Vagina (tissue), 2 donors: ENCODE measurements at regions of chr5 and their contacts with region 1.

Region 1: GRCh38 chr5:76433261-76433660 is 30.2 kb downstream of the IQGAP2 start:
- DNase-seq: no peak
- H3K4me3 ChIP-seq: no peak overlapping the region
- H3K27ac ChIP-seq: no peak overlapping the region
- H3K4me1 ChIP-seq: no peaks in the 10 kb centered on the region
- H3K27me3 ChIP-seq: no peaks in the 10 kb centered on the region
- CTCF ChIP-seq: no peak
- POLR2A ChIP-seq: no peak

Region 2: DNA sequence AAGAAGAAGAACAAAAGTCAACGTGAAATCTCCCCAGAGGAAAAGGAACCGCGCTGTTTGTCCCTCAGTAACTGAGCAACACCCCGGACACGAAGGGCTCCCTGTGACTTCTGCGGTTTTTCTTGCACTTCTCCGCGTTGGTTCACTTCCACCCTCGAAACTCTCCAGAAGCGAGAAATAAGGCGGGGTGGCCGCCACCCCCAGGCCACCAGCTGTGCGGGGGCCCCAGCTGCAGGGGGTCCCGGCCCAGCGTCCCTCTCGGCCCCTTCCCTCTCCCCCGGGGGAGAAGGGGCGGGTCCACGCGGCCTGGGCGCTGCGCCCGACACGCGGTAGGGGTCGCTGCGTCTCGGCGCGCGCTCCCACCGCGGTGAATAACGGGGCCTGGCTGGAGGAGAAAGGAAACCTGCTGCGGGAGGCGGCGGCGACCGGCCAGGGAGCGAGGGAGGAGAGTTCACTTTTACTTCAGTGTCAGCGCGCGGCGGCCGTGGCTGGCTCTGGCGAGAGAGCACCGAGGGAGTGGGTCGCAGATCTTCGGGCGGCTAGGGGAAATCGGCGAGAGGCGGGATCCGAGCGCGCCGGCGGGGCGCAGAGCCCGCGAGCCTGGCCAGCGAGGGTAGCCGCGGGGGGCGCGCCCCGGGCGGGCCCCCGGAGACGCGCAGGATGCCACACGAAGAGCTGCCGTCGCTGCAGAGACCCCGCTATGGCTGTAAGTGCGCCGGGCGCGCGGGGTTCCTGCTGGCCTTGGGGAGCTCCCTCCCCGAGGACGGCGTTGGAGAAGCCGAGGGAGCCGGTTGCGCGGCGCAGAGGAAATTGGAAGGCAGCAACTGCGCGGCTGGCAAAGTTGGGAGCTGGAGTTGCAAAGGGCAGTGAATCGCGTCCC is 30.1 kb before region 1 on chr5 and contains the start of gene IQGAP2:
- intact Hi-C with region 1: no loop called
- DNase-seq: no peak
- H3K4me3 ChIP-seq: peak within 1 kb of the TSS; percentile 51 to 52
- H3K27ac ChIP-seq: peak within 1 kb of the TSS; percentile 65
- H3K4me1 ChIP-seq: peaks cover 17% of the 10 kb centered on the region
- H3K27me3 ChIP-seq: no peaks in the 10 kb centered on the region
- CTCF ChIP-seq: peak in 2 of 3 experiments; percentile 35 to 44
- POLR2A ChIP-seq: no peak
- total RNA-seq, gene IQGAP2: 8.6 TPM

Region 3: DNA sequence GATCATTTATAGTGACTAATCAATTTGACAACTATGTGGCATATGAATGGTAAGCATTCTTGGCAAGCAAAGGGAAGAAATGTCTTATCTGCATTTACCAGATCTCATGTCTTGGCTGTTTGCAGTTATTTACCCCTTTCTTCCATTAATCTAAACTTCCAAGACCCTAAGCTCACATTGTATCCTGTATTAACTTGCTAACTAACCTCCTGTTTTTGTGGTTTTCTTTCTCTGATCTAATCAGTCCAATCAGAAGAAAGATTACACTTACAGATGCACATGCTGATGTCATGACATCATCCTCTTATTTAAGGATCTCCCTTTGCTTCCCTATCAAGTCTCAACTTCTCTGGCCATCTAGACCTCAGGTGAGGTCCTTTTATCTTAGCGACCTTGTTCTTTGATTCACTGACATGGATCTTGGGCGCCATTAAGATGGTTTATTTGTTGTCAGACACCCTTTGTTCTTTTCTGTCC is 94.5 kb after region 1 on chr5:
- intact Hi-C with region 1: no loop called
- DNase-seq: no peak
- H3K4me3 ChIP-seq: no peak overlapping the region
- H3K27ac ChIP-seq: no peak overlapping the region
- H3K4me1 ChIP-seq: no peaks in the 10 kb centered on the region
- H3K27me3 ChIP-seq: no peaks in the 10 kb centered on the region
- CTCF ChIP-seq: no peak
- POLR2A ChIP-seq: no peak

Region 4: DNA sequence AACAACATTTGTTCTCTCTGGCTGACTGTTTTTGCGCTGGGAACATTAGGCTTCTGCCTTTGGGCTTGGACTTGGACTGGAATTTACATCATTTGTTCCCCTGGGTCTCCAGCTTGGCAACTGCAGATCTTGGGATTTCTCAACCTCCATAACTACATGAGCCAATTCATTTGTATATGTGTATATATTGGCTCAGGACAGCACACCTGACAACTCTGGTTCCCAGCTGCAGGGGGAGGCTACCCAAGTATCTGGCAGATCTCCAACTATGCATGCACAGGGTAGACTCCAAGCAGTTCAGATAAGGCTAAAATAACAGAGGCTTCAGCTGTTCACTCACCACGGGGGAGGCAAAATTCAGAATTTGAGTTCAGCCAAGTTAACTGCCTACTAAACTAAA is 354.0 kb after region 1 on chr5:
- intact Hi-C with region 1: no loop called
- DNase-seq: no peak
- H3K4me3 ChIP-seq: no peak overlapping the region
- H3K27ac ChIP-seq: no peak overlapping the region
- H3K4me1 ChIP-seq: peaks cover 21% of the 10 kb centered on the region
- H3K27me3 ChIP-seq: no peaks in the 10 kb centered on the region
- CTCF ChIP-seq: no peak
- POLR2A ChIP-seq: no peak

Region 5: GRCh38 chr5:77560677-77561263 is 1127.5 kb after region 1 on chr5:
- intact Hi-C with region 1: loop called (anchors 10 kb)
- DNase-seq: no peak
- H3K4me3 ChIP-seq: no peak overlapping the region
- H3K27ac ChIP-seq: no peak overlapping the region
- H3K4me1 ChIP-seq: no peaks in the 10 kb centered on the region
- H3K27me3 ChIP-seq: no peaks in the 10 kb centered on the region
- CTCF ChIP-seq: peak in 2 of 3 experiments; percentile 5 to 18
- POLR2A ChIP-seq: no peak